ENCODE measurements at regions of chr14 and their contacts with region 1.

Region 1: GRCh38 chr14:72023722-72024407 is 91.6 kb downstream of the RGS6 start:
- DNase-seq: peak; percentile 58
- H3K4me3 Mint-ChIP-seq: no peak overlapping the region
- H3K27ac Mint-ChIP-seq: no peak overlapping the region
- H3K4me1 Mint-ChIP-seq: peaks cover 5% of the 10 kb centered on the region
- H3K27me3 Mint-ChIP-seq: peaks cover 18% of the 10 kb centered on the region

Region 2: DNA sequence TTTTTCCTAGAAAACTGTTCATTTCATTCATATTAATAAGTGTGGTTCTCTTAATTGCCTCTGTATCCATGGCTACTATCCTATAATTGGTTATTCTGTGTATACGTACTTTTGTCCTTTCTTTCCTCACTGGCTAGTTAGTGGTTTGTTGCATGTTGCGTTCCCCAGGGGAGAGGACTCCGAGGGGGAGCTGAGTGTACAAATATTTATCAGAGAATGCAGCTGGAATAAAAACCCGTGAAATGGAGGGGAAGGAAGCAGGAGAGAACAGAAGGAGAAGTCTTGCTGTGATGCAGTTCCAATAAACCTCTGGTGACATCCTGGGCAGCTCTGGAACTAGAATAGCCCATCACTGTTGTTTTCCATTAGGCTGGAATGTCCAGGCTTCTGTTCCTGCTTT is 208.8 kb before region 1 on chr14:
- CTCF ChIA-PET with region 1: no interaction called
- DNase-seq: no peak
- H3K4me3 Mint-ChIP-seq: no peak overlapping the region
- H3K27ac Mint-ChIP-seq: no peak overlapping the region
- H3K4me1 Mint-ChIP-seq: no peaks in the 10 kb centered on the region
- H3K27me3 Mint-ChIP-seq: peaks cover 26% of the 10 kb centered on the region

Region 3: DNA sequence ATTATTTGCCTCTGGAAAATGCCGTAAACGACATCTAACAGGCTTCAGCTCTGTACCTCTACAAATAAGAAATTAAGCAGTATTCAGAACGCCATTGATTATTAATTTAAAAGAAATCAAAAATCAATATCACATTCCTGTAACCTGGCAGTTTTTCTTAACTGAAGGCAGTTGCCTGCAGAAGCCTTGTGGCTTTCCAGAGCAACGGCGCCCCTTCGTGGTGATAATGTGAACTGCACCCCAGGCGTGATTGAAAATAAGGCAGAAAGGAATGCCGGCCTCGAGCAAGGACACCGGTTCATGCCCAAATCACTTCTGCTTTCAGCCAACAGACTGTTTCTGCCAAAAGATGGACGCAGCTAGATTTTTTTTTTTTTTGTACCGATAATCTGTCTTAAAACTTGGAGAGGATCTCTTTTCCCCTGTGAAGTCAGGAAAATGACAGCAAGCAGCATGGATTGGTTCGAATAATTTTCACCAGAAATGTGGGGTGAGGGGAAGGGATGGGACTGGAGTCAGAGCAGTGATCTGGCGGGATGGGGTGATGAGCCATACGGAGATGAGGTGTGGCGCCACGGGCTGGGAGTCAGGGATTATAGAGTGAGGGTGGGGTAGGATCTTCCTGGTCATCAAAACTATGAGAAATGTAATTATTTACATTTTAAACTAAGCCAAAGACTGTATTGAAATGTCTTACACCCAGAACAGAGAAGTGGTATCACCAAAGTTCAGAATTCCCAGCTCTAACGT is 397.0 kb after region 1 on chr14:
- CTCF ChIA-PET with region 1: interaction called, 18 read pairs
- DNase-seq: peak; percentile 85
- H3K4me3 Mint-ChIP-seq: no peak overlapping the region
- H3K27ac Mint-ChIP-seq: no peak overlapping the region
- H3K4me1 Mint-ChIP-seq: peaks cover 18% of the 10 kb centered on the region
- H3K27me3 Mint-ChIP-seq: peaks cover 47% of the 10 kb centered on the region

Region 4: GRCh38 chr14:72451054-72451972 is 427.4 kb after region 1 on chr14:
- CTCF ChIA-PET with region 1: interaction called, 10 read pairs
- DNase-seq: peak; percentile 66
- H3K4me3 Mint-ChIP-seq: peak overlapping the region; percentile 14
- H3K27ac Mint-ChIP-seq: peak overlapping the region; percentile 85
- H3K4me1 Mint-ChIP-seq: peaks cover 63% of the 10 kb centered on the region
- H3K27me3 Mint-ChIP-seq: peaks cover 6% of the 10 kb centered on the region

Measured in activated naive CD4-positive, alpha-beta T cell treated with anti-CD3 and anti-CD28 coated beads, Interleukin-2, amount 10 ng/mL, durations not matched to agents 7 days and 5 days (primary cell).